B cell (primary cell): ENCODE measurements at regions of chr6 and their contacts with region 1.

Region 1: GRCh38 chr6:14129575-14129974 is 12.0 kb downstream of the CD83 start:
- DNase-seq: peak; percentile 69
- ATAC-seq: no peak
- H3K4me3 ChIP-seq: peak overlapping the region in 1 of 5 experiments; percentile 15
- H3K4me3 Mint-ChIP-seq: peak overlapping the region; percentile 82
- H3K27ac ChIP-seq: peak overlapping the region in 1 of 2 donors; percentile 43
- H3K27ac Mint-ChIP-seq: peak overlapping the region; percentile 80
- H3K4me1 ChIP-seq: peaks cover 78 to 90% of the 10 kb centered on the region in 2 donors
- H3K4me1 Mint-ChIP-seq: peaks cover 93% of the 10 kb centered on the region
- H3K27me3 ChIP-seq: no peaks in the 10 kb centered on the region
- H3K27me3 Mint-ChIP-seq: no peaks in the 10 kb centered on the region
- CTCF ChIP-seq: no peak

Region 2: GRCh38 chr6:14117158-14118090 is 12.2 kb before region 1 on chr6 and contains the start of gene CD83:
- CTCF ChIA-PET with region 1: interaction called, 22 read pairs
- POLR2A ChIA-PET with region 1: interaction called, 7 read pairs
- intact Hi-C with region 1: no loop called
- DNase-seq: peak; percentile 97
- ATAC-seq: peak; percentile 80
- H3K4me3 ChIP-seq: peak within 1 kb of the TSS; percentile 75 to 100 (median 94)
- H3K4me3 Mint-ChIP-seq: peak within 1 kb of the TSS; percentile 93
- H3K27ac ChIP-seq: peak within 1 kb of the TSS; percentile 99
- H3K27ac Mint-ChIP-seq: peak within 1 kb of the TSS; percentile 97
- H3K4me1 ChIP-seq: peaks cover 37 to 44% of the 10 kb centered on the region in 2 donors
- H3K4me1 Mint-ChIP-seq: peaks cover 37% of the 10 kb centered on the region
- H3K27me3 ChIP-seq: no peaks in the 10 kb centered on the region
- H3K27me3 Mint-ChIP-seq: no peaks in the 10 kb centered on the region
- CTCF ChIP-seq: no peak
- total RNA-seq, gene CD83: 332 and 339 TPM in 2 replicates